ENCODE measurements at regions of chr1 and their contacts with region 1.

Region 1: GRCh38 chr1:25874934-25875855 is at the start of gene PAQR7:
- DNase-seq: peak; percentile 67
- ATAC-seq: peak; percentile 80
- H3K4me3 ChIP-seq: peak within 1 kb of the TSS; percentile 69 to 95 (median 70)
- H3K27ac ChIP-seq: peak within 1 kb of the TSS; percentile 79
- H3K4me1 ChIP-seq: peaks cover 71% of the 10 kb centered on the region
- H3K27me3 ChIP-seq: no peaks in the 10 kb centered on the region; a peak in 1 of 5 replicates
- CTCF ChIP-seq: peak; percentile 57
- EP300 ChIP-seq: 0 out of 4 replicates have a peak, but pooled peaks of 1 of the 2 experiments have one; percentile 10
- POLR2A ChIP-seq: peak in 1 of 2 experiments; percentile 60; a peak in 3 of 4 replicates
- RAD21 ChIP-seq: no peak; the same call in none of the 2 replicates
- total RNA-seq, gene PAQR7: 6.0 and 13.2 TPM in 2 replicates

Region 2: DNA sequence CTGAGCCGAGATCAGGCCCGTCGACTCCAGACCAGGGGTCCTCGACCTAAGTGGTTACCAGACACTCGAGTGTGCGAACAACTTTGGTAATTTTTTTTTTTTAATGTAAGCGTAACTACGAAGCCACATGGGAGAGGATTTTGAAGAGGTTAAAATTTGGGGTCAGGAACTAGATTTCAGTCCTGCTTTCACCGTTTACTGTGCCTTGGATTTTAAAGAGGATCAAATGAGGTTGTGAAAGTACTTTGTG is 15.5 kb before region 1 on chr1:
- CTCF ChIA-PET with region 1: no interaction called
- POLR2A ChIA-PET with region 1: interaction called, 32 read pairs
- in situ Hi-C with region 1: no loop called
- intact Hi-C with region 1: no loop called
- DNase-seq: no peak
- ATAC-seq: no peak; the same call in 2 of the 3 replicates
- H3K4me3 ChIP-seq: peak overlapping the region; percentile 88 to 94 (median 93)
- H3K27ac ChIP-seq: peak overlapping the region; percentile 87
- H3K4me1 ChIP-seq: peaks cover 63% of the 10 kb centered on the region
- H3K27me3 ChIP-seq: no peaks in the 10 kb centered on the region; a peak in 1 of 5 replicates
- CTCF ChIP-seq: no peak
- EP300 ChIP-seq: no peak
- POLR2A ChIP-seq: no peak
- RAD21 ChIP-seq: no peak

Measured in HepG2 (cell line).